ENCODE measurements at regions of chr7 and their contacts with region 1.

Region 1: DNA sequence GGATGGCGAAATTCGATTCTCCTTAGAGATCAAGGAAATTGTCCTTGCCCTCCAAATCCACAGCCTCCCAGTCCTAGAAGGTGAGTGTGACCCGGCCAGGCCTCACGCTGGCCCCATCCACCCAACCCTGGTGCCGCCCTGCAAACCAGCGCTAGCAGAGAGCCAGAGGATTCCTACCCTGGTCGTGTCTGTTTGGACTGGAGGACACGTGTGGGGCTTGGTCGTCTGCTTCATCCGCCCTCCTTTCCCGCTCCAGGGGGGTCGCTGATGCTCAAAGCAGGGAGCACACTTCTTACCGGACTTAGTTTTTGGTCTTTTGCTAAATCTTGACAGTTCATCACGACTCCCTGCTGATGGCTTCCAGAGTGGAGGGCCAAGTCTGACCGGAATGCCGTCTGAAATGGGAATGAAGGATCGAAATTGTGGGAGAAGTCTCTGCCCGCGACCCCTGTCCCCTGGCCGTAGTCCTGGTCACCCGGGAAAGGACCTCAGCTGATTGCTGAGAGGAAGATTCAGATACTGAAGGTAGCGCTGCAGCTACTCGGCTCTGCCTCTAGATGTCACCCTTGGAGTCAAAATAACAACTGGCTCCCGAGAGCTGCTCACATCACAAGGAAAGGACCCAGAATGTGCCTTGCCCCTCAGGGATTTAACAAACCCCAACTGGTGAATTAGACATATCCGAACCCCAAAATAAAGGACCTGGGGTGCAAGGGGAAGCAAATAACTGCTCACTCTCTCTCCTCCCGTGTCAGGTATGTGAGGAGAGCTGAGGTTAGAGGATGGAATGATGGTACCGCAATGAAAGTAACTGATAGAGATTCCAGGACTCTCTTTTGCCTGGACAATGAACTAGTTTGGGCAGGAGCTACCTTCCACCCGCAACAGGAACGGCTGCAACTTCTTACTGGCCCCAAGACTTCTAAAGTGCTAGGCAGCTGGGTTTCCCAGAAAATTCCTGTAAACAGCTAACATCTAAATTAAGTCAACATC is 23.5 kb upstream of the ORC5 start:
- DNase-seq: peak; percentile 57
- ATAC-seq: peak; percentile 85
- H3K4me3 Mint-ChIP-seq: no peak overlapping the region
- H3K27ac Mint-ChIP-seq: no peak overlapping the region
- H3K4me1 Mint-ChIP-seq: no peaks in the 10 kb centered on the region
- H3K27me3 Mint-ChIP-seq: peaks cover 11% of the 10 kb centered on the region
- CTCF ChIP-seq: peak; percentile 85

Region 2: GRCh38 chr7:104111271-104111670 is 120.1 kb before region 1 on chr7:
- CTCF ChIA-PET with region 1: no interaction called
- POLR2A ChIA-PET with region 1: no interaction called
- intact Hi-C with region 1: no loop called
- DNase-seq: no peak
- ATAC-seq: no peak
- H3K4me3 Mint-ChIP-seq: no peak overlapping the region
- H3K27ac Mint-ChIP-seq: no peak overlapping the region
- H3K4me1 Mint-ChIP-seq: no peaks in the 10 kb centered on the region
- H3K27me3 Mint-ChIP-seq: no peaks in the 10 kb centered on the region
- CTCF ChIP-seq: no peak

Region 3: GRCh38 chr7:104267701-104268368 is 36.5 kb after region 1 on chr7:
- CTCF ChIA-PET with region 1: interaction called, 15 read pairs
- POLR2A ChIA-PET with region 1: no interaction called
- intact Hi-C with region 1: no loop called
- DNase-seq: no peak
- ATAC-seq: no peak
- H3K4me3 Mint-ChIP-seq: no peak overlapping the region
- H3K27ac Mint-ChIP-seq: no peak overlapping the region
- H3K4me1 Mint-ChIP-seq: no peaks in the 10 kb centered on the region
- H3K27me3 Mint-ChIP-seq: peaks cover 12% of the 10 kb centered on the region
- CTCF ChIP-seq: peak; percentile 60

Measured in activated CD8-positive, alpha-beta T cell treated with anti-CD3 and anti-CD28 coated beads for 36 hours (primary cell).